ENCODE measurements at regions of chr18 and their contacts with region 1.

Region 1: GRCh38 chr18:12737243-12737902 is 34.5 kb downstream of the PSMG2 start:
- ATAC-seq: no peak
- H3K4me3 ChIP-seq: no peak overlapping the region
- H3K27ac ChIP-seq: no peak overlapping the region
- H3K4me1 ChIP-seq: no peaks in the 10 kb centered on the region

Region 2: DNA sequence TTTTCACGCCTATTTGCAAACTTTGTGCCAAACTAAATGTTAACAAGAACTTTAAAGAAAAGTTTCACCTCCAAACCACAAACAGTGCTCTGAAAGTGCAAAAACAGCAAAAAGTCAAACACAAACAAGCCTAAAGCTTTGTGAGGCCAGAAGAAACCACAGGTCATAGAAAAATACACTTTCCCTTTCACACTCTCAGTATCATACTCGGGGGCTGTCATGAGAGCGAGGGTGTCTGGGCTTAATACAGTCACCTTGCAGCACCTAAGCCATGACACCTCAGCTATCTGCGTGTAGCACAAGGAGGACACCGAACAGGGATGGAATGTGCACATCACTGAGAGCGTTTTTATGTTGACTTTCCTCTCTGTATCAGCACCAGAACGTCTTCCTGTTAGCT is 183.8 kb after region 1 on chr18:
- in situ Hi-C with region 1: loop called in 3 of 9 experiments (anchors 10 to 25 kb)
- ATAC-seq: no peak
- H3K4me3 ChIP-seq: no peak overlapping the region
- H3K27ac ChIP-seq: no peak overlapping the region
- H3K4me1 ChIP-seq: peaks cover 0 to 3% of the 10 kb centered on the region in 2 donors

Region 3: DNA sequence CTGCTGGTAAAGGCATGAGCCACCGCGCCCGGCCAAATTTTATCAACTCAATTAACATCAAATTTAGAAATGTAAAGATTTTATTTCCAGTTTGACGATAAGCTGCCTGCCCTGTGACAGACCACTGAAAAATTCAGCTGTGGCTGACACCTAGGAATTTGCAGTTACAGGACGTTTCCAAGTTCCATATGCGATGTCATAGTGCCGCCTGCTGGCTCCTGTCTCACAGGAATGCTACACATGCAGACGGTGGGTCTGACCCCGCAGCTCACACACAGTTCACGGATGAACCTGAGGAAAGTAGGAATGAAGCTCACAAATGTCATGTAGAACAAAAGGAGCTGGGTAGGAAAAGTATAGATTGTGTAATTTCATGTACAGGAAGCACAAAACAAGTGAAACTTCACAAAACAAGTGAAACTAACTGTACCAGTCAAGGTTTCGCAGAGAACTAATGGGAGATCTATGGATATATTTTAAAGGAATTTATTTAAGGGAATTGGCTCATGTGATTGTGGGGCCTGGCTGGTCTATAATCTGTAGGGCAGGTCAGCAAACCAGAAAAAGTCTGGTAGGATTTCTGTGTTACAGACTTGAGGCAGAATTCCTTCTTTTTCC is 197.2 kb after region 1 on chr18:
- in situ Hi-C with region 1: loop called in 4 of 9 experiments (anchors 10 to 25 kb)
- ATAC-seq: peak; percentile 89 to 99 (median 93)
- H3K4me3 ChIP-seq: no peak overlapping the region
- H3K27ac ChIP-seq: no peak overlapping the region
- H3K4me1 ChIP-seq: peaks cover 0 to 4% of the 10 kb centered on the region in 2 donors